GM10248 (cell line): ENCODE measurements at regions of chr11 and their contacts with region 1.

Region 1: GRCh38 chr11:31254431-31254830 is 115.1 kb downstream of the DCDC1 start:
- DNase-seq: no peak
- CTCF ChIP-seq: no peak

Region 2: DNA sequence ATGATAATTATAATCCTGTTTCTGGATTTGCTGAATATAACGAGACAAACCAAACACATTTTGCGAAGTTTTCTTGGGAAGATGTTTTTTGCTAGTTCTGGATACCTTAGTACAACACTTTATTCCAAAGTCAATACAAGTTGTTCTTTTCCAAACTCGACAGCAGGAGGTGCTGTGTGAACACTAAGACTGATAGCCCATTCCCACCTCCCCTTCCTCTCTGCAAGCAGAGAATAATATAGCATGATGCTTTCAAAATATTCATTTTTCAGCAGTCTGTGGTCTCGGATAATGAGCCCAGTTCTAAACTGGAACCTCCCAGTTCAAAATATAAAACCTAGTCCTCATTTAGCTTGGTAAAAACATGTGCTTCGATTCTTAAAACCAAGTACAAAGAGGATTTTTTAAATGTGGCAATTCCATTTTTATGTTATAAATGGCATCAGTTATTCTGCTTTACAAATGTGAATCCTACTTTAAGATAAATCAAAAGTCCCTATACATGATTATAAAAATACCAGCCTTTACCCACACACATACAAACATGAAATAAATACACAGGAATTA is 14.0 kb before region 1 on chr11:
- CTCF ChIA-PET with region 1: interaction called, 27 read pairs
- POLR2A ChIA-PET with region 1: no interaction called
- DNase-seq: no peak
- CTCF ChIP-seq: peak; percentile 38